HepG2 (cell line): ENCODE measurements at regions of chr16 and their contacts with region 1.

Region 1: GRCh38 chr16:50403491-50403890 is 34.7 kb upstream of the BRD7 start:
- DNase-seq: no peak
- ATAC-seq: no peak; the same call in 2 of the 3 replicates
- H3K4me3 ChIP-seq: no peak overlapping the region
- H3K27ac ChIP-seq: no peak overlapping the region
- H3K4me1 ChIP-seq: 0 out of 2 replicates have a peak, but pooled peaks cover 7% of the 10 kb centered on the region
- H3K27me3 ChIP-seq: peaks cover 5 to 34% of the 10 kb centered on the region in 2 experiments; a peak in 4 of 5 replicates
- CTCF ChIP-seq: no peak
- EP300 ChIP-seq: no peak
- POLR2A ChIP-seq: no peak
- RAD21 ChIP-seq: no peak

Region 2: GRCh38 chr16:50437769-50438437 is 34.4 kb after region 1 on chr16:
- CTCF ChIA-PET with region 1: no interaction called
- POLR2A ChIA-PET with region 1: no interaction called
- in situ Hi-C with region 1: no loop called
- intact Hi-C with region 1: loop called (anchors 5 kb)
- DNase-seq: peak; percentile 80
- ATAC-seq: peak; percentile 83
- H3K4me3 ChIP-seq: peak overlapping the region in 2 of 3 experiments; percentile 2 to 51; a peak in 1 of 6 replicates
- H3K27ac ChIP-seq: no peak overlapping the region
- H3K4me1 ChIP-seq: peaks cover 43% of the 10 kb centered on the region
- H3K27me3 ChIP-seq: peaks cover 4 to 22% of the 10 kb centered on the region in 2 experiments; a peak in 3 of 5 replicates
- CTCF ChIP-seq: no peak
- EP300 ChIP-seq: peak in 1 of 2 experiments; percentile 63; a peak in 1 of 4 replicates
- POLR2A ChIP-seq: no peak
- RAD21 ChIP-seq: no peak